ENCODE measurements at regions of chr3 and their contacts with region 1.

Region 1: GRCh38 chr3:182792901-182793662 is at the start of gene ATP11B:
- DNase-seq: peak; percentile 75
- H3K4me3 Mint-ChIP-seq: peak within 1 kb of the TSS; percentile 94
- H3K27ac Mint-ChIP-seq: peak within 1 kb of the TSS; percentile 98
- H3K4me1 Mint-ChIP-seq: peaks cover 34% of the 10 kb centered on the region
- H3K27me3 Mint-ChIP-seq: no peaks in the 10 kb centered on the region
- total RNA-seq, gene ATP11B: 92.3 and 95.1 TPM in 2 replicates

Region 2: GRCh38 chr3:180989291-180990163 is 1803.6 kb before region 1 on chr3 and contains the start of gene DNAJC19:
- intact Hi-C with region 1: loop called (anchors 10 kb)
- DNase-seq: peak; percentile 86
- H3K4me3 Mint-ChIP-seq: peak within 1 kb of the TSS; percentile 91
- H3K27ac Mint-ChIP-seq: peak within 1 kb of the TSS; percentile 88
- H3K4me1 Mint-ChIP-seq: peaks cover 14% of the 10 kb centered on the region
- H3K27me3 Mint-ChIP-seq: no peaks in the 10 kb centered on the region
- total RNA-seq, gene DNAJC19: 59.3 and 60.8 TPM in 2 replicates

Region 3: DNA sequence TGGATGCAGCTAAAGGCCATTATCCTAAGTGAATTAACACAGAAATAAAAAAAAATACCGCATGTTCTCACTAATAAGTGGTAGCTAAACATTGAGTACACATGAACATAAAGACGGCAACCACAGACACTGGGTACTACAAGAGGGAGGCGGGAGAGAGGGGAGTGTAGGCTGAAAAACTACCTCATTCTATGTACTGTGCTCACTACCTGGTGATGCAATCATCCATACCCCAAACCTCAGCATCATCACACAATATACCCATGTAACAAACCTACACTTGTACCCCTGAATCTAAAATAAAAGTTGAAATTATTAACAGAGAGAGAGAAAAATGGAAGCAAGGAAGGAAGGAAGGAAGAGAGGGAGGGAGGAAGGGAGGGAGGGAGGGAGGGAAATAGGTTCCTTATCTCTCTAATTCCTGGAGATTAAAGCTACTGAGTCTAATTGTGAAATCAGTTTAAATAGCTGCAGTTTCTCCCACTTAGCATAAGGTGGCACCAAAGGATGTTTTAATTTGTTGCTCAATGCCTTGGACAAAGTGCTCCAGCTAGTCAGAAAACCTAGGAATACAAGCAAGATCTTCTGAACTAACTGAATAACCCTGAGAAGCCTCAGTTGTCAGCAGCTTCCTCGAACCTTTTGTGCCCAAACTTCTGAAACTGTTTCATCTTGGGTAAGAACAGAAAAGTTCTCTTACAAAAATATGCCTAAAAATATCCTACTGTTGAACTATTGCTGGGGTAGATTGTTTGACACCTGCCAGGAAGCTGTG is 79.2 kb before region 1 on chr3:
- intact Hi-C with region 1: loop called (anchors 5 kb)
- DNase-seq: no peak
- H3K4me3 Mint-ChIP-seq: no peak overlapping the region
- H3K27ac Mint-ChIP-seq: no peak overlapping the region
- H3K4me1 Mint-ChIP-seq: peaks cover 19% of the 10 kb centered on the region
- H3K27me3 Mint-ChIP-seq: peaks cover 9% of the 10 kb centered on the region

Region 4: DNA sequence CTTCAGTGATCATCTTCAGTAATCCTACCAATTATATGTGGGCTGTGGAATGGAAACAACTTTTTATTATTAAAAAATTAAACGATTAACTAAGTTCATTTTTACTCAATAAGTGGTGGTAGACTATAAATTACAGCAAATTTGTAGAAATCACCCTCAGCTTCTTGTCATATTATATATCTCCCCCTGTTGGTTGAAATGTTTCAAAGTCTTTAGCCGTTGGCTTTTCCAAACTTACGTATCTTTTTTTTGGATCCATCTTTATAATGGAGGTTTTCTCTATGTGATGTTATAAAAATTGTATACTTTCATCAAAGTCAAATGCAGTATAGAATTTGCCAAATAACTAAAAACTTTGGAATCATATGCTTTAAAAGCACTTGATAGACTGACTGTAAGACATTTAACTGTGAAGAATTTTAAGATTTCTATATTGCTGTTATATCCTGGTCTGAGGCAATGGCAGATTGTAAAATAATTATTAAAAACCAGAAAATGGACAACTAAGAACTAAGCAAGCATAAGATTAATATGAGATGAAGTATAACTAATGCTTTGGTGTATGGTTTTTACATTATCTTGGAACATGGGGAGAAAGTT is 44.9 kb after region 1 on chr3:
- intact Hi-C with region 1: loop called (anchors 2 kb)
- DNase-seq: no peak
- H3K4me3 Mint-ChIP-seq: no peak overlapping the region
- H3K27ac Mint-ChIP-seq: no peak overlapping the region
- H3K4me1 Mint-ChIP-seq: no peaks in the 10 kb centered on the region
- H3K27me3 Mint-ChIP-seq: no peaks in the 10 kb centered on the region

Region 5: DNA sequence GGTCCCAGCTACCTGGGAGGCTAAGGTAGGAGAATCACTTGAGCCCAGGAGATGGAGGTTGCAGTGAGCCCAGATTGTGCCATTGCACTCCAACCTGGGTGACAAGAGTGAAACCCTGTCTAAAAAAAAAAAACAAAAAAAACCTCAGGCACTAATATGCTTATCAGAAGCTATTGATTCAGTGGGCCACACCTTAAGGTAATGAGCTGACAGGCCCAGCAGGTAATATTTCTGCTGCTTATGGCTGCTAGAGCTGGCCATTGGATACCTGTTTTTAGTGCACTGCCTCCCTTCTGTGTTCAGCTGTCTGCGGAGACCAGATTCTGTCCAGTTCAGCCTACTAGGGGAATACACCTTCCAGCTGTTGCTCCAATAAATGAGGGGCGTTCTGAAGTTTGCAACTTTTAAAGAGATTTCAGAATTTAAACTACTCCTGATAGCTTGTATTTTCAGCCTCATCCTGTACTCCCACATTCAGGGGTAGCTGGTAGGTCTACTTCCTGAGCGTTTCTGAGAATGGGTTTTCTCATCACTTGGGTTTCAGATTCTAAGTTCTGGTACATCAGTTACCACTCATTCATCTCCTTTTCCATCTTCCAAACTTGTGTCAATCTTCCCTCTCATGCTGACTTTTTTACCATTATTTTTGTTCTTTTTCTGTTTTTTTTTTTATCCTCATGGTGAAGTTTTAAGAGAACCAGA is 69.2 kb after region 1 on chr3:
- intact Hi-C with region 1: loop called (anchors 2 kb)
- DNase-seq: no peak
- H3K4me3 Mint-ChIP-seq: peak overlapping the region; percentile 50
- H3K27ac Mint-ChIP-seq: peak overlapping the region; percentile 81
- H3K4me1 Mint-ChIP-seq: peaks cover 29% of the 10 kb centered on the region
- H3K27me3 Mint-ChIP-seq: no peaks in the 10 kb centered on the region

Region 6: GRCh38 chr3:182980204-182981037 is 187.3 kb after region 1 on chr3 and contains the start of gene DCUN1D1:
- intact Hi-C with region 1: loop called (anchors 2 kb)
- DNase-seq: peak; percentile 89
- H3K4me3 Mint-ChIP-seq: peak within 1 kb of the TSS; percentile 95
- H3K27ac Mint-ChIP-seq: peak within 1 kb of the TSS; percentile 90
- H3K4me1 Mint-ChIP-seq: peaks cover 26% of the 10 kb centered on the region
- H3K27me3 Mint-ChIP-seq: no peaks in the 10 kb centered on the region
- total RNA-seq, gene DCUN1D1: 63.2 and 67.2 TPM in 2 replicates

Region 7: GRCh38 chr3:183158551-183159006 is 365.5 kb after region 1 on chr3:
- intact Hi-C with region 1: loop called (anchors 10 kb)
- DNase-seq: peak; percentile 33
- H3K4me3 Mint-ChIP-seq: peak overlapping the region; percentile 45
- H3K27ac Mint-ChIP-seq: peak overlapping the region; percentile 73
- H3K4me1 Mint-ChIP-seq: peaks cover 48% of the 10 kb centered on the region
- H3K27me3 Mint-ChIP-seq: no peaks in the 10 kb centered on the region

Measured in activated T-helper 1 cell treated with anti-CD3 and anti-CD28 coated beads, Interleukin-12 subunit alpha, Interleukin-12 subunit beta, Interleukin-2, Interleukin-4 antibody, amounts not matched to agents 30 ng/mL and 10 ng/mL and 1 ng/mL, durations not matched to agents 14 hours and 24 hours and 36 hours (primary cell).